ENCODE measurements at regions of chr3 and their contacts with region 1.

Region 1: DNA sequence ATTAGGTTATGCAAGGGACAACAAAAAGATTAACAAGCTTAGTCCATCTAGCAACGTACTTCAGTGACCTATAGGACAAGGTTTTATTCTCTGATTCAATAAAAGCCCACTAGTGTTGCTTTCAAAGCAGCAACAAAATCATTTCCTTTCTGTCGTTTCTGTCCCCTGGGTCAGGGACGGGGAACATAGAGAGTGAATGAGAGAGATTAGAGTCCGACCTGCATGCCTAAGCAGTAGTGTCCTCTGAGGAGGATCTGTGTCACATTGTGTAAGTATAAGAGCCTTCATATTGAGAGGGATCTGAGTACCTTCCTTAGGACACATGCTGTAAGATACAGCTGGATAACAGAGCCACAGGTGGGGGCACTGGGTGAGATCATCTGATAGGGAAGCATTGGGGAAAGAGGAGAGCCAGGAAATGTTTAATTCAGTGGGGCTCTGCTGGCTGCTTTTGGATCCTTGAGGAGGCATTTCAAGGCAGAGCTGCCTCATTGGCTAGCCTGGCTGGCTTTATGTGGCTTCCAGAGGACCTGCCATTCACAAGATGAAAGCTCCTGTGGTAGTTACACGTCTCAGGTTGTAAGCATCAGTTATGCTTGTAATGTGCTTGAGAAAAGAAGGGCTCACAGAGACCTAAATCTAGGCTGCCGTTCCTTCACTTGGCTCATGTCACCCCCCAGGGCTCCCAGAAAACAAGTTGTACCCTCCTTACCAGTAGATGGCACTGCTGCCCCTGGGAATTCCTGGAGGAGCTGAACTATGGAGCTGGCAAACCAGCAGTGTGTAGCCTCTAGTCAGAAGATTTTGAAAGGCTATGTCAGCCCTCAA is 2.7 kb downstream of the TMEM108 start:
- DNase-seq: peak; percentile 51
- ATAC-seq: peak; percentile 97
- H3K4me3 ChIP-seq: no peak overlapping the region
- H3K27ac ChIP-seq: no peak overlapping the region
- H3K4me1 ChIP-seq: no peaks in the 10 kb centered on the region
- H3K27me3 ChIP-seq: peaks cover 59% of the 10 kb centered on the region
- CTCF ChIP-seq: peak; percentile 73 to 80 (median 77); a peak in 5 of 6 replicates
- POLR2A ChIP-seq: no peak
- RAD21 ChIP-seq: peak; percentile 85

Region 2: GRCh38 chr3:132722164-132723024 is 318.5 kb before region 1 on chr3 and contains the start of gene NPHP3:
- CTCF ChIA-PET with region 1: interaction called, 4 read pairs
- POLR2A ChIA-PET with region 1: no interaction called
- RAD21 ChIA-PET with region 1: no interaction called
- intact Hi-C with region 1: loop called (anchors 2 kb)
- DNase-seq: peak; percentile 86
- ATAC-seq: peak; percentile 89
- H3K4me3 ChIP-seq: peak within 1 kb of the TSS; percentile 78 to 79
- H3K27ac ChIP-seq: peak within 1 kb of the TSS; percentile 59
- H3K4me1 ChIP-seq: peaks cover 7 to 21% of the 10 kb centered on the region in 2 experiments; a peak in 3 of 4 replicates
- H3K27me3 ChIP-seq: no peaks in the 10 kb centered on the region
- CTCF ChIP-seq: 0 out of 6 replicates have a peak, but pooled peaks of 1 of the 3 experiments have one; percentile 3
- POLR2A ChIP-seq: peak; percentile 52
- RAD21 ChIP-seq: no peak
- total RNA-seq, gene NPHP3: 15.5 TPM

Region 3: DNA sequence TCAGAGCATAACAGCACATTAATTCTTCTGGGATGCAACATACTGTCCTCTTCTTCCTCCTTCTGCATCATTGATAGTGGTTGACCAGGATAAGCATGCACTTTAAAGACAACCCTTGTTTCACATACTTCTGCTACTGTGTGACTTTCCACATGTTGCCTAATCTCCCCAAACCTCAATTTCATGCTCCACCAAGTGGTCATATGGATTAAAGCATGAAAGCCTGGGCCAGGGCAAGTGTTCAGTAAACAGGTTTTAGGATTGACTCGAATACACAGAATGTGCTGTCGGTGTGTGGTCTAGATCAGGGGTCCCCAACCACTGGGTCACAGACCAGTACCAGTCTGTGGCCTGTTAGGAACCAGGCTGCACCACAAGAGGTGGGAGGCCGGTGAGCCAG is 336.5 kb after region 1 on chr3:
- CTCF ChIA-PET with region 1: interaction called, 25 read pairs
- POLR2A ChIA-PET with region 1: no interaction called
- RAD21 ChIA-PET with region 1: no interaction called
- intact Hi-C with region 1: loop called (anchors 1 kb)
- DNase-seq: no peak
- ATAC-seq: peak; percentile 75
- H3K4me3 ChIP-seq: no peak overlapping the region
- H3K27ac ChIP-seq: no peak overlapping the region
- H3K4me1 ChIP-seq: no peaks in the 10 kb centered on the region
- H3K27me3 ChIP-seq: peaks cover 72% of the 10 kb centered on the region
- CTCF ChIP-seq: peak; percentile 37 to 55 (median 39); a peak in 4 of 6 replicates
- POLR2A ChIP-seq: no peak
- RAD21 ChIP-seq: peak; percentile 64

Region 4: GRCh38 chr3:133426721-133427120 is 385.8 kb after region 1 on chr3:
- CTCF ChIA-PET with region 1: interaction called, 18 read pairs
- POLR2A ChIA-PET with region 1: no interaction called
- RAD21 ChIA-PET with region 1: no interaction called
- intact Hi-C with region 1: loop called (anchors 1 kb)
- DNase-seq: no peak
- ATAC-seq: no peak
- H3K4me3 ChIP-seq: no peak overlapping the region
- H3K27ac ChIP-seq: no peak overlapping the region
- H3K4me1 ChIP-seq: peaks cover 0 to 3% of the 10 kb centered on the region in 2 experiments; a peak in 2 of 4 replicates
- H3K27me3 ChIP-seq: peaks cover 16% of the 10 kb centered on the region; the same call in 1 of the 2 replicates
- CTCF ChIP-seq: no peak
- POLR2A ChIP-seq: no peak
- RAD21 ChIP-seq: no peak

Measured in HCT116 (cell line).